ENCODE measurements at regions of chrX and their contacts with region 1.

Region 1: GRCh38 chrX:23782863-23783568 is at the start of gene SAT1:
- DNase-seq: peak; percentile 83
- H3K4me3 ChIP-seq: peak within 1 kb of the TSS; percentile 82
- H3K27ac ChIP-seq: peak within 1 kb of the TSS; percentile 93
- H3K27me3 ChIP-seq: no peaks in the 10 kb centered on the region
- CTCF ChIP-seq: peak; percentile 70
- polyA plus RNA-seq, gene SAT1: 151 and 202 TPM in 2 replicates

Region 2: GRCh38 chrX:23656684-23657083 is 126.3 kb before region 1 on chrX:
- CTCF ChIA-PET with region 1: no interaction called
- POLR2A ChIA-PET with region 1: no interaction called
- DNase-seq: no peak
- H3K4me3 ChIP-seq: no peak overlapping the region
- H3K27ac ChIP-seq: no peak overlapping the region
- H3K27me3 ChIP-seq: no peaks in the 10 kb centered on the region
- CTCF ChIP-seq: no peak

Region 3: GRCh38 chrX:23742697-23743622 is 40.1 kb before region 1 on chrX and contains the start of gene ACOT9:
- CTCF ChIA-PET with region 1: interaction called, 4 read pairs
- POLR2A ChIA-PET with region 1: interaction called, 20 read pairs
- DNase-seq: peak; percentile 89
- H3K4me3 ChIP-seq: peak within 1 kb of the TSS; percentile 75
- H3K27ac ChIP-seq: peak within 1 kb of the TSS; percentile 87
- H3K27me3 ChIP-seq: no peaks in the 10 kb centered on the region
- CTCF ChIP-seq: no peak
- polyA plus RNA-seq, gene ACOT9: 45.7 and 62.5 TPM in 2 replicates

Region 4: DNA sequence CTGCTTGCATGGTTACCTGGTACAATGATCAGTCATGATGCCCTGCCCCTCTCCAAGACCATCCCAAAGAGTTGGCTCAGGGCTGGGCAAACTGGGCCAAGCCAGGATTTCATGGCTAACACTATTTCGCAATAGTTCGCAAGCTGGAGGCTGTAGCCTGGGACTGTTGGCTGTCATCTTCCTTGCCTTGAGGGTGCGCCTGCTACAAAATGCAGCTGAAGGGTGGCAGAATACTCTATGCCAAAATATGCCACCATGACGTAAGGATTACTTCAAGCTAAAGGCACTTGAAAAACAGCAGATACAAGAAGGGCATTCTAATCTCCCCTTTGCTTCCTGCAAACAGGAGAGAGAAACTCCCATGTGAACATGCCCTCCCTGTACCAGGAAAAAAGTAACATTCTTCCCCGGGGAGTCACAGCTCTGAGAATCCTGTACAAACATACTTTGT is 20.9 kb after region 1 on chrX:
- CTCF ChIA-PET with region 1: interaction called, 11 read pairs
- POLR2A ChIA-PET with region 1: interaction called, 12 read pairs
- DNase-seq: no peak
- H3K4me3 ChIP-seq: no peak overlapping the region
- H3K27ac ChIP-seq: peak overlapping the region; percentile 52
- H3K27me3 ChIP-seq: no peaks in the 10 kb centered on the region
- CTCF ChIP-seq: no peak

Measured in AG04450 (cell line).